ENCODE measurements at regions of chr15 and their contacts with region 1.

Region 1: DNA sequence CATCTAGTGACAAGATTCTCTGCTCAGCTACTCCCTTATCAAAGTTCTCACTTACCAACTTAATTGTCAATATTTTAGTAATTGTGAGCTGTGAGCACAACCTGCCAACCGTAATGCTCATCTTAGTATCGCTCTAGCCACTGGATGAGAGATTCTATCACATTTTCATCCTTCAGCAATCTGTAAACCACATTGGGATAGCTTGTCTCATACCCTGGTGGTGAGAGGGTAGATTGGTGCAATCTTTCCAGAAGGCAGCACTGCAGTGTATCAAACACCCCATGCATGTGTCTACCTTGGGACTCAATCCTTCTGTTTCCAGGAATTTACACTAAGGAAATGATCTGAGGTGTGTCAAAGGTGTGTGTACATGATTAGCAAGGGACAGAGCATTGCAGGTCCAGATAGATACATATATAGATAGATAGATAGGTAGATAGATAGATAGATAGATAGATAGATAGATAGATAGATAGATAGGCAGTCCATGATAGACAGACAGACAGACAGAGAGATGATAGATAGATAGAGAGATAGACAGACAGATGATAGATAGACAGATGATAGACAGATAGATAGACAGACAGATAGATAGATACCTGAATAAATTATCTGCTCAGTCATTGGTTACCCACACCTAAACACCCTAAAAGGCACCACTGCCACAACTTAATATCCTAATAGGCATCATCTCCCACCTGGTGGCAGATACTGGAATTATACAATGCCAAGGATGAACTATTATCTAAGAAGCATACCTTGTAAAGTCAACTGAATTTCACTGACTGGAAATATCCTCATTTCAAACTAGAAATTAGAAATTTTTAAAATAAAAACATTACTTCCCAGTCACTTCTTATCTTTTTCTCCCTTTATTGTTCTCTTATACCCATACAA is 19.1 kb upstream of the ATP8B4 start:
- DNase-seq: no peak
- H3K4me3 ChIP-seq: no peak overlapping the region
- H3K27ac ChIP-seq: peak overlapping the region; percentile 63
- H3K4me1 ChIP-seq: peaks cover 25% of the 10 kb centered on the region
- H3K27me3 ChIP-seq: no peaks in the 10 kb centered on the region
- CTCF ChIP-seq: peak; percentile 47 to 51

Region 2: GRCh38 chr15:49789436-49789835 is 348.7 kb before region 1 on chr15:
- CTCF ChIA-PET with region 1: no interaction called
- dilution Hi-C with region 1: no loop called
- in situ Hi-C with region 1: no loop called
- intact Hi-C with region 1: no loop called
- DNase-seq: no peak
- H3K4me3 ChIP-seq: no peak overlapping the region
- H3K27ac ChIP-seq: no peak overlapping the region
- H3K4me1 ChIP-seq: no peaks in the 10 kb centered on the region
- H3K27me3 ChIP-seq: no peaks in the 10 kb centered on the region
- CTCF ChIP-seq: no peak

Region 3: DNA sequence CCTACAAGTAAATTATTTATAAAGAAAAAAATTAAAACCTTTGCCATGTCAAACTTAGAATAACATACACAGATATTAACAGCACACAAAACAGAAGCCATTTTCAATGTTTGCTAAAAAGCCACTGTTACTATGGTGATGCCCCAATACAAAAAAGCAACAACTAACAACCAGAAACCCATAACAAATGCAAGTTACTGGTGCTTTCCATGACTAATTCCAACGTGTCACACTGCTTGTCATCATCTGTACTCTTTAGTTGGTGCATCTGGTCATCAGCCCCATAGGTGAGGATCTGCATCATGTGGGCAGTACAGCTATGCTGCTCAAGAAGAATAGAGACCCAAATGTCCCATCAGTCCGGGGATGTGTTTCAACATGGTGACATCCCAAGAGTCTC is 72.0 kb before region 1 on chr15:
- CTCF ChIA-PET with region 1: no interaction called
- dilution Hi-C with region 1: no loop called
- in situ Hi-C with region 1: no loop called
- intact Hi-C with region 1: no loop called
- DNase-seq: peak; percentile 53
- H3K4me3 ChIP-seq: no peak overlapping the region
- H3K27ac ChIP-seq: no peak overlapping the region
- H3K4me1 ChIP-seq: no peaks in the 10 kb centered on the region
- H3K27me3 ChIP-seq: no peaks in the 10 kb centered on the region
- CTCF ChIP-seq: no peak

Region 4: DNA sequence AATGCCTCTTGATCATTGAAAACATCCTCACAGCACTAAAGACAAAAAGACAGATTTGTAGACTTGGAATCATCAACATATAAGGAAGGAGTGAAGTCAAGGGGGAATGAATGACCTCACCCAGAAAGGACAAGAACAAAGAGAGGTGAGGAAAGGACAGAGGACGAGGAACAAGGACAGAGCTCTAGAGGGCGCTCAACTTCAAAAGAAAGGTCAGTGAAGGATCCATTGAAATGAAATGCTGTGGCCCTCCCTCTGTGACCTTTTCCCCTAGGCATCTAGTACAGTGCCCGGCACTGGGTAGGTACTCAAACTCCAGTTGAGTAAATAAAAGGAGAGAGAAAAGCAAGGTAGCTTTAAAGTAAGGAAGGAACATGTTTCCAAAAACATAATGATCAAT is 21.7 kb before region 1 on chr15:
- CTCF ChIA-PET with region 1: no interaction called
- dilution Hi-C with region 1: no loop called
- in situ Hi-C with region 1: no loop called
- intact Hi-C with region 1: loop called (anchors 2 kb)
- DNase-seq: peak; percentile 24
- H3K4me3 ChIP-seq: no peak overlapping the region
- H3K27ac ChIP-seq: no peak overlapping the region
- H3K4me1 ChIP-seq: no peaks in the 10 kb centered on the region
- H3K27me3 ChIP-seq: no peaks in the 10 kb centered on the region
- CTCF ChIP-seq: peak; percentile 45 to 63

Measured in mammary epithelial cell (primary cell).